T-cell (primary cell): ENCODE measurements at regions of chr7 and their contacts with region 1.

Region 1: GRCh38 chr7:140656548-140657515 is 15.9 kb upstream of the ADCK2 start:
- DNase-seq: peak in 14 of 35 experiments; percentile 8 to 61 (median 22)
- ATAC-seq: peak; percentile 66 to 92 (median 87)
- H3K4me3 ChIP-seq: peak overlapping the region in 1 of 2 donors; percentile 30
- H3K4me3 Mint-ChIP-seq: peak overlapping the region; percentile 65 to 83 (median 73)
- H3K27ac ChIP-seq: peak overlapping the region; percentile 56
- H3K27ac Mint-ChIP-seq: peak overlapping the region; percentile 89 to 95
- H3K4me1 ChIP-seq: peaks cover 0 to 21% of the 10 kb centered on the region in 2 experiments
- H3K4me1 Mint-ChIP-seq: peaks cover 18 to 25% (median 21%) of the 10 kb centered on the region in 3 donors
- H3K27me3 ChIP-seq: peaks cover 0 to 22% of the 10 kb centered on the region in 2 experiments
- H3K27me3 Mint-ChIP-seq: peaks cover 0 to 10% of the 10 kb centered on the region in 2 donors

Region 2: GRCh38 chr7:140182917-140183316 is 473.9 kb before region 1 on chr7:
- CTCF ChIA-PET with region 1: interaction called in 1 of 2 experiments, 13 read pairs
- POLR2A ChIA-PET with region 1: no interaction called
- DNase-seq: no peak
- ATAC-seq: no peak
- H3K4me3 ChIP-seq: no peak overlapping the region
- H3K4me3 Mint-ChIP-seq: no peak overlapping the region
- H3K27ac ChIP-seq: no peak overlapping the region
- H3K27ac Mint-ChIP-seq: peak overlapping the region in 1 of 2 donors; percentile 10
- H3K4me1 ChIP-seq: peaks cover 3 to 4% of the 10 kb centered on the region in 2 experiments
- H3K4me1 Mint-ChIP-seq: peaks cover 8 to 12% (median 9%) of the 10 kb centered on the region in 3 donors
- H3K27me3 ChIP-seq: no peaks in the 10 kb centered on the region
- H3K27me3 Mint-ChIP-seq: peaks cover 3 to 14% of the 10 kb centered on the region in 2 donors

Region 3: DNA sequence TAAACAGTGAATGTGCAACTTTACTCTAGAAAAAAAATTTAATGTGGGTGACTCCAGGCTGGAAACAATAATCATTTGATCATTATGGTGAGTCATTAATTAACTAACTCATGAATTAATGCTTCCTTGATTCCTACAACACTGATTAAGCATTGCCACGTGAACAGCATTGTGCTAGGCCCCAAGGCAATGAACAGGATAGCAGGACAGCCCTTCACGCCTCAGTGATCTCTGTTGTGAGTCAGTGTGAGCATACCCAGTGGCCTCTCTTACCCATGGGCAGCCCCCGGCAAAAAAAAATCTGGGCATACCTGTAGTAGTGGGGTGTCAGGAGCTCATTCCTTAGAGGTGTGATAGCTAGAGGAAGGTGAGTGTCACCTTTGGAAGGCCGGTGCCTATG is 92.2 kb before region 1 on chr7:
- CTCF ChIA-PET with region 1: no interaction called
- POLR2A ChIA-PET with region 1: no interaction called
- DNase-seq: no peak
- ATAC-seq: no peak
- H3K4me3 ChIP-seq: no peak overlapping the region
- H3K4me3 Mint-ChIP-seq: no peak overlapping the region
- H3K27ac ChIP-seq: no peak overlapping the region
- H3K27ac Mint-ChIP-seq: no peak overlapping the region
- H3K4me1 ChIP-seq: no peaks in the 10 kb centered on the region
- H3K4me1 Mint-ChIP-seq: no peaks in the 10 kb centered on the region
- H3K27me3 ChIP-seq: peaks cover 0 to 4% of the 10 kb centered on the region in 2 experiments
- H3K27me3 Mint-ChIP-seq: peaks cover 0 to 3% of the 10 kb centered on the region in 2 donors